ENCODE measurements at regions of chr9 and their contacts with region 1.

Region 1: GRCh38 chr9:35611230-35611797 is 6.3 kb downstream of the TESK1 start:
- DNase-seq: peak; percentile 72
- ATAC-seq: peak; percentile 90
- H3K4me3 ChIP-seq: no peak overlapping the region
- H3K4me3 Mint-ChIP-seq: no peak overlapping the region
- H3K27ac ChIP-seq: peak overlapping the region in 1 of 2 donors; percentile 45
- H3K27ac Mint-ChIP-seq: peak overlapping the region; percentile 77
- H3K4me1 ChIP-seq: peaks cover 59 to 85% of the 10 kb centered on the region in 2 donors
- H3K4me1 Mint-ChIP-seq: peaks cover 67% of the 10 kb centered on the region
- H3K27me3 ChIP-seq: no peaks in the 10 kb centered on the region
- H3K27me3 Mint-ChIP-seq: no peaks in the 10 kb centered on the region
- CTCF ChIP-seq: peak; percentile 76

Region 2: DNA sequence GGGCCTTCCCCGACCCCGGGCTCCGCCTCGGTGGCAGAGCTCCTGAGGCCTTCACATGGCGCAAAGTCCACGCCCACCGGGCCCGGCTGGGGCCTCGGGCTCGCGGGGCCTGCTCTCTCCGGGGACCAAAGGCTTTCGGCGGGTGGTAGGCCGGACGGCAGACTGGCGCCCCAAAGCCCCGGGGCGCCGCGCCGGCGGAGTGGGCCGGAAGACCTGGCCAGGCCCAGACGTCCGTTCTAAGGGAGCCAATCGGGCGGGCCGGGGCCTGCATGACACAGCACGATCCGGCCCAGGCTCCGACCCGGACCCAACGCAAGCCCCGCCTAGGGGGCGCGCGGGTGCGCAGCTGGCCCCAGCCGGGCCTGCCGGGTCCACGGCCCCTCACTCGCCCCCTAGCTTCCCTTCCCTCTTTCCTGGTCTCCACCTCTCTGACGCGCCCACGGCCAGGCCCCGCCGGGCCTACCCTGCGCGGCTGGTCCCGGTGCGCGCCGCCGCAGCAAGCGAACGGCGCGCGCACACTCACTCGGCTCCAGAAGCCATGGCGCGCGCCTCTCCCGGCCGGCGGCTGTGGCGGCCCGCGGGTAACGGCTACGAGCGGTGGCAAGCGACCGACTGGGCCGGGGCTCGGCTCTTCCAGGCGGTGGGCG is 539.4 kb before region 1 on chr9:
- CTCF ChIA-PET with region 1: no interaction called
- POLR2A ChIA-PET with region 1: no interaction called
- intact Hi-C with region 1: no loop called
- DNase-seq: peak; percentile 89
- ATAC-seq: peak; percentile 64
- H3K4me3 ChIP-seq: peak overlapping the region; percentile 73 to 96 (median 86)
- H3K4me3 Mint-ChIP-seq: peak overlapping the region; percentile 89
- H3K27ac ChIP-seq: peak overlapping the region; percentile 84 to 97
- H3K27ac Mint-ChIP-seq: peak overlapping the region; percentile 90
- H3K4me1 ChIP-seq: peaks cover 40 to 45% of the 10 kb centered on the region in 2 donors
- H3K4me1 Mint-ChIP-seq: peaks cover 49% of the 10 kb centered on the region
- H3K27me3 ChIP-seq: no peaks in the 10 kb centered on the region
- H3K27me3 Mint-ChIP-seq: no peaks in the 10 kb centered on the region
- CTCF ChIP-seq: peak; percentile 52

Region 3: GRCh38 chr9:35628389-35628991 is 17.2 kb after region 1 on chr9:
- CTCF ChIA-PET with region 1: interaction called, 21 read pairs
- POLR2A ChIA-PET with region 1: interaction called, 6 read pairs
- intact Hi-C with region 1: no loop called
- DNase-seq: no peak
- ATAC-seq: no peak
- H3K4me3 ChIP-seq: no peak overlapping the region
- H3K4me3 Mint-ChIP-seq: no peak overlapping the region
- H3K27ac ChIP-seq: no peak overlapping the region
- H3K27ac Mint-ChIP-seq: peak overlapping the region; percentile 10
- H3K4me1 ChIP-seq: peaks cover 14 to 16% of the 10 kb centered on the region in 2 donors
- H3K4me1 Mint-ChIP-seq: peaks cover 37% of the 10 kb centered on the region
- H3K27me3 ChIP-seq: no peaks in the 10 kb centered on the region
- H3K27me3 Mint-ChIP-seq: no peaks in the 10 kb centered on the region
- CTCF ChIP-seq: no peak

Region 4: DNA sequence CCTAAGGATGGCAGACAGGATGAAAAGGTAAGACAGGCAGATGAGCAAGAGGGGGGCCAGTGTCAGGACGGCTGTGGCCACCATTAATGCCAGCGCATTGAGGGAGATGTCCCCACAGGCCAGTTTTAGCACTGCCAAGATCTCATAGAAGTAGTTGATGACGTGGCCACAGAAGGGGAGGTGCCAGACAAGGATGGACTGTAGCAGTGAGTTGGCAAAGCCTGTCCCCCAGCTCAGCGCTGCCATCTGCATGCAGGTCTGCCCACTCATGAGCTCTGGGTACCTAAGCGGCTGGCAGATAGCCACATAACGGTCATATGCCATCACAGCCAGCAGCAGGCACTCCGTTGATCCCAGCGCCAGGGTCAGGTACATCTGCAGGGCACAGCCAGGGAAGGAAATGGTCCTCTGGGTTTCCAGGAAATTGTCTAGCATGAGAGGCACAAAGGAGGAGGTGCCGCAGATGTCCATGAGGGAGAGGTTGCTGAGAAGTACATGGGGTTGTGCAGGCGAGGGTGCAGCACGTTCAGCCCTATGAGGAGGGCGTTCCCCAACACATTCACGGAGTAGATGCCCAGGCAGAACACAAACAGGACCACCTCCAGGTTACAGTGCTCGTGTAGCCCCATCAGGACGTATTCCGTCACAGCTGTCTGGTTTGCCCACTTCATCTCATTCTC is 248.1 kb after region 1 on chr9:
- CTCF ChIA-PET with region 1: no interaction called
- POLR2A ChIA-PET with region 1: no interaction called
- intact Hi-C with region 1: no loop called
- DNase-seq: peak; percentile 45
- ATAC-seq: peak; percentile 76
- H3K4me3 ChIP-seq: no peak overlapping the region
- H3K4me3 Mint-ChIP-seq: no peak overlapping the region
- H3K27ac ChIP-seq: no peak overlapping the region
- H3K27ac Mint-ChIP-seq: no peak overlapping the region
- H3K4me1 ChIP-seq: no peaks in the 10 kb centered on the region
- H3K4me1 Mint-ChIP-seq: no peaks in the 10 kb centered on the region
- H3K27me3 ChIP-seq: peaks cover 0 to 12% (median 3%) of the 10 kb centered on the region in 4 experiments
- H3K27me3 Mint-ChIP-seq: peaks cover 22% of the 10 kb centered on the region
- CTCF ChIP-seq: no peak

Region 5: DNA sequence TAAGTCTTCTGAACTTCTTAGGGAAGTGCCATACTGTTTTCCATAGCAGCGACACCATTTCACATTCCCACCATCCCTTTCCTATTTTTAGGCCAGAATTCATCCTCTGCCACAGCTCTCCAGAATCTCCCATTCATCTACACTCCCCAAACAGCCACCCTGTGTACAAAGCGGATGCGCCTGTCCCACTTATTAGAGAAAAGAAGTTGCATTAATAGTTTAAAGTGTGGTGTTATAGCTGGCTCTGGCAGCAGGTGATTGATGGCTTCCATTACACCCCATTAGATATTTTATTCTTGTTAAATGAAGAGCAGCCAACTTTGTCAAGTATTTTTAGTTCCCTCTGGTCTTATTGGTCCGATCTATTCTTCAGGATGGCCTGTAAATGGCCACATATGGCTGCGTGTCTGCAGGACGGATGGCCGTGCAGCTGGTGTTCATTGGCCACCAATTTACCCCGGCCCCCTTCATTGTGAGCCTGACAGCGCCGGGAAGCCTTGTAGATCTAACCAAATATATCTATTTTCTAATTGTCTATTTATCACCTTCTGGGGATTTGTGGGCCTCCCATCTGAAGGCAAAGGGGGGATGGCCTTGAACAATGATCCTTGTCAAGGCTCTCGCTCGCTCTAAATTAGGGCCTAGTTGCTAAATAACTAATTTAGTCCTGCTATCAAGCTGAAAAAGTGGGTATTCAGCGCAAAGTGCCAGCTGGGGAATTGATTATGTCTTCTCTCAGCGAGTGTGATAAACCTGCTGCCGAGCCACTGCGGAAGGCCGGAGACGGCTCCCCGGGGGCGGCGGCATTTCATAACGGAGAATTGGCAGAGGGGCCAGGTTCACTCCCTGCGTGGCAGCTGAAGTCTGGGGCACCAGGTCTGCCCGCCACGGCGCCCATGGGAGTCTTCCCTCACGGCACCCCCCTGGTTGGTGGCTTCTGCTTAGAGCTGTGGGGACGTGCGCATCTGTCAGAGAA is 1102.5 kb after region 1 on chr9:
- CTCF ChIA-PET with region 1: no interaction called
- POLR2A ChIA-PET with region 1: no interaction called
- intact Hi-C with region 1: no loop called
- DNase-seq: no peak
- ATAC-seq: no peak
- H3K4me3 ChIP-seq: no peak overlapping the region
- H3K4me3 Mint-ChIP-seq: no peak overlapping the region
- H3K27ac ChIP-seq: no peak overlapping the region
- H3K27ac Mint-ChIP-seq: no peak overlapping the region
- H3K4me1 ChIP-seq: peaks cover 0 to 1% of the 10 kb centered on the region in 2 donors
- H3K4me1 Mint-ChIP-seq: peaks cover 3% of the 10 kb centered on the region
- H3K27me3 ChIP-seq: no peaks in the 10 kb centered on the region
- H3K27me3 Mint-ChIP-seq: peaks cover 8% of the 10 kb centered on the region
- CTCF ChIP-seq: no peak